Breast epithelium (tissue), 4 donors: ENCODE measurements at regions of chr17 and their contacts with region 1.

Region 1: DNA sequence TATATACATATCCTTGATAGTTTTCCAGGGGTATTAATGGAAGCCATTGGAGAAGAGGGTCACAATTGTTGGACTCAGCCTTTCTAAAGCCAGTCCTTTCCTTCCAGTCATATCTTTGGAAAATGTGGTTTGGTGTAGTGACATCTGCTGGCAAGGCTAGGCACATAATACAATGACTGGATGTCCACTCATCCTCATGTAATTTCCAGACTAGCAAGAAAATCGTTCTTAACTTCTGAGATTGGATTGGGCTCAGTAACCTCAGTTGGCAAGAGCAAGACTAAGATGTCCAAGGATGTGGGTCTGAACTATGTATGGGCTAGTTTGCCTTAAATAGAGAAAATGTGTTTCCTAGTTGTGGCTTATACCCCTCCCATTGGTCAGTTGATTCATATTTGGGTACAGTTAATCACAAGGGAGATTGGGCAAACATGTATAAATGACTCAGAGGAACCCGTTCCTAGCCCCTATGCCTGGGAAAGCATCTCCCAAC is 8.7 kb upstream of the KAT7 start:
- DNase-seq: no peak
- H3K4me3 ChIP-seq: no peak overlapping the region
- H3K27ac ChIP-seq: no peak overlapping the region
- H3K4me1 ChIP-seq: no peaks in the 10 kb centered on the region
- H3K27me3 ChIP-seq: no peaks in the 10 kb centered on the region
- CTCF ChIP-seq: peak in 2 of 3 donors; percentile 54 to 62
- POLR2A ChIP-seq: no peak

Region 2: DNA sequence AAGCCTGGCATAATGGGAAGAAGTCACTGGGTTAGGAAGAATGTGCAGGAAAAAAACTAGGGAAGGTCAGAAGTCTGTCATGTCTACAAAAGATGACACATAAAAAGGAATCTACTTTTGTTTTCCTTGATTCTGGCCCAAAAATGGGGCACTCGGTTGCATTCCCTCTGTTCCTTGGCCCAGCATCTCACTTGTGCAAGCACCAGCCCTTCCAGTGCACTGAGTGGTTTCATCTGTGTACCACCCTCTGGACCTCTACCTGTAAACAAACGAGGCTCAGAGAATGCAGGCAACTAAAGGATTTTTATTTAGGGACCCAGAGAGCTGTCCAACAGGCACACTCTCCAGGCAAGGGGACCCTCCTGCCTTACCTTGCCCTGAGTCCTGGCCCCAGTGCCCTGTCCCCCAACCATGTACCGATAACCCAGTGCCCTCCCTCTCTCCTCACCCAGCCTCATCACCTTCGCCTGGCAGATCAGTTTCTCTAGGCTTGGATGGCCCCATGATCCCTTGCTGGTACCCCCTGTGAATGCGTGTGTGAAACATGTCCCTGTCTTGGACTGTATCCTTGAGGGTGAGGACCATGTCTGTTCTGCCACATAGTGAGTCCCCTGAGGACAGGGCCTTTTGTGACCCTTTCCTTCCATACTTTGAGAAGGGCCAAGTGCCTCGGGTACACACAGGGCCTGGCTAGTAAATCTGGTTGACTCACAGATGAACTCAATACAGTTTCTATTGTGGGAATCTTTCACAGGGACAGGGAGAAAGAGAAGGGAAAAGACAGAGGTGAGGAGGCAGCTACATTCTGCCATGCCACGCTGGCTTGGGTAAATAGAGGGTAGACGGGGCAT is 190.8 kb before region 1 on chr17:
- intact Hi-C with region 1: no loop called
- DNase-seq: peak in 1 of 2 donors; percentile 15
- H3K4me3 ChIP-seq: no peak overlapping the region
- H3K27ac ChIP-seq: no peak overlapping the region
- H3K4me1 ChIP-seq: no peaks in the 10 kb centered on the region
- H3K27me3 ChIP-seq: no peaks in the 10 kb centered on the region
- CTCF ChIP-seq: no peak
- POLR2A ChIP-seq: no peak

Region 3: GRCh38 chr17:49715717-49716279 is 64.0 kb before region 1 on chr17:
- intact Hi-C with region 1: loop called (anchors 5 kb)
- DNase-seq: no peak
- H3K4me3 ChIP-seq: no peak overlapping the region
- H3K27ac ChIP-seq: peak overlapping the region in 1 of 2 donors; percentile 11
- H3K4me1 ChIP-seq: no peaks in the 10 kb centered on the region
- H3K27me3 ChIP-seq: no peaks in the 10 kb centered on the region
- CTCF ChIP-seq: no peak
- POLR2A ChIP-seq: no peak

Region 4: DNA sequence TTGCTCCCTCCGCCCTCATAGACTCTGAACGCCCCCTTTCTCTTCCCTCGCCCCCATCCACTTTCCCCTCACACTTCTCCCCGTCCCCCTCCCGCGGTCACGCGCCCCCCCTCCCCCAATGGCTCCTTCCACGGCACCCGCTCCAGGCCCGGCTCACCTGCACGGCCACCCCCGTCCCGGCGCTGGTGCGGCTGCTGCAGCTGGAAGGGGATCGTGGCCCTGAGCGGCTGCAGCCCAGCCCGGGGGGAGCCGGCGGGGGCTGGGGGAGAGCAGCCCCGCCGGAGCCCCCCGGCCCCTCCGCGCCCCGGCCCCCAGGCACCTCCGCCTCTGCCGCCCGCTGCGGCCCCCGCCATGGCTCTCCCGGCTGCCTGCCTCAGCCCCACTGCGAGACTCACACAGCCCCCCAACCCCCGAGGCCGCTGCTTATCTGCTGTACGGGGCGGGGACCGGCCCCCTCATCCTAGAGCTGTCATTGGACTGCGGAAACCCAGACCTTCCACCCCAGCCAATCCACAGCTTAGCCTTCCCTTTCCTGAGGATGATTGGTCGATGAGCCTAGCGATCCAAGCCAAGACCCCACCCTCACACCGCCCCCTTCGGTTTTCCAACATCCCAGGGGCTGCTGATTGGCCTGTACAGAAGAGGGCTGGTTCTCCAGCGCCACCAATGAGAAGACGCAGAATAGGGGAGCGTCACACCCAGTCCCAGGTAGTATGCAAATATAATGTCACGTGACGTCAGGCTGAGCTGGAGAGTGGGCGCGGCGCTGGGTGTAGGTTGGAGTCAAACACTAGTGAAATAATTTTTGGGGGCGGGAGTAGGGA is 15.8 kb before region 1 on chr17 and contains the start of gene FAM117A:
- intact Hi-C with region 1: no loop called
- DNase-seq: peak; percentile 97 to 100
- H3K4me3 ChIP-seq: peak within 1 kb of the TSS; percentile 59 to 95 (median 82)
- H3K27ac ChIP-seq: peak within 1 kb of the TSS; percentile 79 to 84
- H3K4me1 ChIP-seq: peaks cover 0 to 5% of the 10 kb centered on the region in 2 donors
- H3K27me3 ChIP-seq: no peaks in the 10 kb centered on the region
- CTCF ChIP-seq: no peak
- POLR2A ChIP-seq: no peak
- total RNA-seq, gene FAM117A: 8.0 to 11.6 (median 9.8) TPM